Activated T-helper 1 cell treated with anti-CD3 and anti-CD28 coated beads, Interleukin-12 subunit alpha, Interleukin-12 subunit beta, Interleukin-2, Interleukin-4 antibody, amounts not matched to agents 30 ng/mL and 10 ng/mL and 1 ng/mL, durations not matched to agents 14 hours and 24 hours and 36 hours (primary cell): ENCODE measurements at regions of chrX and their contacts with region 1.

Region 1: GRCh38 chrX:49199906-49200771 is at the start of gene SYP:
- DNase-seq: peak; percentile 83
- H3K4me3 Mint-ChIP-seq: peak within 1 kb of the TSS; percentile 53
- H3K27ac Mint-ChIP-seq: peak within 1 kb of the TSS; percentile 58
- H3K4me1 Mint-ChIP-seq: peaks cover 19% of the 10 kb centered on the region
- H3K27me3 Mint-ChIP-seq: peaks cover 7% of the 10 kb centered on the region
- total RNA-seq, gene SYP: 2.9 and 3.3 TPM in 2 replicates

Region 2: GRCh38 chrX:49184294-49185061 is 15.7 kb before region 1 on chrX:
- intact Hi-C with region 1: no loop called
- DNase-seq: no peak
- H3K4me3 Mint-ChIP-seq: peak overlapping the region; percentile 84
- H3K27ac Mint-ChIP-seq: peak overlapping the region; percentile 75
- H3K4me1 Mint-ChIP-seq: peaks cover 13% of the 10 kb centered on the region
- H3K27me3 Mint-ChIP-seq: no peaks in the 10 kb centered on the region

Region 3: DNA sequence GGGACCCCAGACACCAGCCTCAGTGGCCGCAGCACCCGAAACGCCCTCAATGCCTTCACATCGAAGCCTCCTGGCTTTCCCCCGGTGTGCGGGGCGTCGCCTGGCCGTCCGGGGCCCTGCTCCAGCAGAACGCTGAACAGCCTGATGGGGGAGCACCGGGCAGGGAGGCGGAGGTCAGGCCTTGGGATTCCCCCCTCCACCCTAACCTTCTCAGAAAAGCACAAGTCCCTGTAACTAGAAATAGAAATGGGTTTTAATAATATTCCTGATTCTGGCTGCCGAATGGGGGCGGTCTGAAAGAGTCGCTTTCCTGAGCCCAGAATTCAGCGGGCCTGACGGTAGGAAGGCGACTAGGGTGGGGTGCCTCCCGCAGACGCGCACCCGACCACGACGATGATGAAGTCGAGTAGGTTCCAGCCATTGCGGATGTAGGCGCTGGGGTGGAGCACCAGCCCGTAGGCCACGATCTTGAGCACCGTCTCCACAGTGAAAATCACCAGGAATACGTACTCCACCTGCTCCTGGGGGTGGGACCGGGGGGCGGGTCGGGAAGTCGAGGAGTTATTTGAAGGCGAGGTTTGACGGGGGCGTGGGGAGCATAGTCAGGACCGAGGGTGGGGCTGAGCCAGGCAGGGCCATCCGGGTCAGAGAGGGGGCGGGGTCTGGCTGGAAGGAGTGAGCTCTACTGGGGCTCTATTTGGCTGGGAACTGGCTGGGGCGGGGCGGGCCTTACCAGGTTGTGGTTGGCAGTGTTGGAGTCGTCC is 30.5 kb after region 1 on chrX:
- intact Hi-C with region 1: loop called (anchors 1 kb)
- DNase-seq: peak; percentile 53
- H3K4me3 Mint-ChIP-seq: peak overlapping the region; percentile 60
- H3K27ac Mint-ChIP-seq: peak overlapping the region; percentile 79
- H3K4me1 Mint-ChIP-seq: peaks cover 17% of the 10 kb centered on the region
- H3K27me3 Mint-ChIP-seq: peaks cover 4% of the 10 kb centered on the region